ENCODE measurements at regions of chr4 and their contacts with region 1.

Region 1: GRCh38 chr4:113831457-113831856 is 69.9 kb upstream of the CAMK2D start:
- DNase-seq: no peak
- H3K4me3 ChIP-seq: no peak overlapping the region
- H3K27ac ChIP-seq: no peak overlapping the region
- H3K4me1 ChIP-seq: no peaks in the 10 kb centered on the region
- H3K27me3 ChIP-seq: no peaks in the 10 kb centered on the region
- CTCF ChIP-seq: no peak
- POLR2A ChIP-seq: no peak

Region 2: DNA sequence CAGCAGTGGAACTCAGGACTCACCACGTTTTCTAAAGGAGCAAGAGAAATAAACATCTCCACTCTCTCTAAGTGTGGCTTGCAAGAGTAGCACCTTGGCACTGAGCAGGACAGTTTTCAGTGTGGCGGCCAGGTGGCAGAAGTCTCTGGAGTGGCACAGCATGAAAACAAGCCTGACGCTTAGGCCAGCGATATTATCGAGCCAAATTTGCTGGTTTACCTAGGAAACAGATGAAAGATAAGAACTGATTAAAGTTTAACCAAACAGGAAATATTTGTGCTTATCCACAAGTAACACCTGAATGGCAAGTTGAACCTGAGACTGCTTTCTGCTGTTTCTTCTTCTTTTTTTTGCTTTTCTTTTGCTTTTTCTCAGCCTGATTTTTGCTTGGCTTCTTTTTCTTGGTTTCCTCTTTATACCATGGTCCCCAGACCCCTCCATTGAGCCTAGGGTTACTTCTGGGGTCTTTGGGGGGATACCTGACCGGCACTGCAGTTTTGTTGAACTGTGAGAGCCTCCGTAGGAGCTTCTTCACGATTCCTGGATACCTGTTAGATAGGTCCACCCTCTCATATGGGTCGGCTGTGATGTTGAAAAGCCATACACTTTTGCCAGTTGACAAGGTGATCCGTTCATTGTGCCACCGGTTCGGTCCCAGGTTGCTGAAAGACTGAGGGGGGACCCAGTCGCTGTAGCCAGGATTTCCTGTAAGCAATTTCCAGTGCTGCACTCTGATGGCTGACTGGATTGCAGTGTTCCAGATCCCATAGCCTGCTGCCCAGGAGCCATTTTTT is 70.7 kb after region 1 on chr4:
- intact Hi-C with region 1: no loop called
- DNase-seq: peak; percentile 51 to 63
- H3K4me3 ChIP-seq: no peak overlapping the region
- H3K27ac ChIP-seq: no peak overlapping the region
- H3K4me1 ChIP-seq: no peaks in the 10 kb centered on the region
- H3K27me3 ChIP-seq: no peaks in the 10 kb centered on the region
- CTCF ChIP-seq: peak in 2 of 3 donors; percentile 43 to 61
- POLR2A ChIP-seq: no peak

Region 3: GRCh38 chr4:114072781-114073180 is 241.3 kb after region 1 on chr4:
- intact Hi-C with region 1: loop called (anchors 5 kb)
- DNase-seq: no peak
- H3K4me3 ChIP-seq: no peak overlapping the region
- H3K27ac ChIP-seq: no peak overlapping the region
- H3K4me1 ChIP-seq: no peaks in the 10 kb centered on the region
- H3K27me3 ChIP-seq: no peaks in the 10 kb centered on the region
- CTCF ChIP-seq: no peak
- POLR2A ChIP-seq: no peak

Measured in breast epithelium (tissue), 4 donors.